ENCODE measurements at regions of chr9 and their contacts with region 1.

Region 1: DNA sequence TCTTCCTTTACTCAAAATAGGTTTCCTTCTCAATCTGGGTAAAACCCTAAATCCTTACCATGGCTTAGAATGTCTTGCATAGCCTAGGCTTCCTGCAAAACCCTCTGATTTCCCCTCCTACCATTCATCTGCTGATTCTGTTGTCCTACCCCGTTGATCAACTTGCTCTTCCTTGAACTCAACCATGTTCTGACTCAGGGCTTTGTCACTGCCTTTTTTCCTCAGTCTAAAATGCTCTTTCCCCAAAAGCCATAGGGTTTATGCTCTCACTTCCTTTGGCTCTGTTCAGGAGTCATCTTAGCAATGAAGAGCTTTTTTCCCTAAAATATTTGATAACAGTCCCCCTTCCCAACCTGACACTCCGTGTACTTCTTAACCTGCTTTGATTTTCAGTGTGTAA is 79.4 kb upstream of the IZUMO3 start:
- DNase-seq: no peak
- ATAC-seq: no peak
- H3K4me3 ChIP-seq: no peak overlapping the region
- H3K4me3 Mint-ChIP-seq: no peak overlapping the region
- H3K27ac ChIP-seq: no peak overlapping the region
- H3K27ac Mint-ChIP-seq: no peak overlapping the region
- H3K4me1 ChIP-seq: no peaks in the 10 kb centered on the region
- H3K4me1 Mint-ChIP-seq: no peaks in the 10 kb centered on the region
- H3K27me3 ChIP-seq: no peaks in the 10 kb centered on the region
- H3K27me3 Mint-ChIP-seq: no peaks in the 10 kb centered on the region

Region 2: GRCh38 chr9:23555851-23556250 is 1069.2 kb before region 1 on chr9:
- CTCF ChIA-PET with region 1: no interaction called
- POLR2A ChIA-PET with region 1: no interaction called
- intact Hi-C with region 1: no loop called
- DNase-seq: no peak
- ATAC-seq: no peak
- H3K4me3 ChIP-seq: no peak overlapping the region
- H3K4me3 Mint-ChIP-seq: no peak overlapping the region
- H3K27ac ChIP-seq: no peak overlapping the region
- H3K27ac Mint-ChIP-seq: no peak overlapping the region
- H3K4me1 ChIP-seq: no peaks in the 10 kb centered on the region
- H3K4me1 Mint-ChIP-seq: peaks cover 0 to 4% (median 0%) of the 10 kb centered on the region in 7 donors
- H3K27me3 ChIP-seq: no peaks in the 10 kb centered on the region
- H3K27me3 Mint-ChIP-seq: no peaks in the 10 kb centered on the region

Region 3: GRCh38 chr9:24698881-24699518 is 73.9 kb after region 1 on chr9:
- CTCF ChIA-PET with region 1: no interaction called
- POLR2A ChIA-PET with region 1: no interaction called
- intact Hi-C with region 1: loop called in 1 of 2 experiments (anchors 10 kb)
- DNase-seq: no peak
- ATAC-seq: no peak
- H3K4me3 ChIP-seq: no peak overlapping the region
- H3K4me3 Mint-ChIP-seq: peak overlapping the region in 2 of 10 donors; percentile 2 to 61
- H3K27ac ChIP-seq: no peak overlapping the region
- H3K27ac Mint-ChIP-seq: no peak overlapping the region
- H3K4me1 ChIP-seq: no peaks in the 10 kb centered on the region
- H3K4me1 Mint-ChIP-seq: peaks cover 0 to 3% (median 0%) of the 10 kb centered on the region in 7 donors
- H3K27me3 ChIP-seq: no peaks in the 10 kb centered on the region
- H3K27me3 Mint-ChIP-seq: no peaks in the 10 kb centered on the region

Measured in naive thymus-derived CD4-positive, alpha-beta T cell (primary cell).